Mammary epithelial cell (primary cell): ENCODE measurements at regions of chr7 and their contacts with region 1.

Region 1: DNA sequence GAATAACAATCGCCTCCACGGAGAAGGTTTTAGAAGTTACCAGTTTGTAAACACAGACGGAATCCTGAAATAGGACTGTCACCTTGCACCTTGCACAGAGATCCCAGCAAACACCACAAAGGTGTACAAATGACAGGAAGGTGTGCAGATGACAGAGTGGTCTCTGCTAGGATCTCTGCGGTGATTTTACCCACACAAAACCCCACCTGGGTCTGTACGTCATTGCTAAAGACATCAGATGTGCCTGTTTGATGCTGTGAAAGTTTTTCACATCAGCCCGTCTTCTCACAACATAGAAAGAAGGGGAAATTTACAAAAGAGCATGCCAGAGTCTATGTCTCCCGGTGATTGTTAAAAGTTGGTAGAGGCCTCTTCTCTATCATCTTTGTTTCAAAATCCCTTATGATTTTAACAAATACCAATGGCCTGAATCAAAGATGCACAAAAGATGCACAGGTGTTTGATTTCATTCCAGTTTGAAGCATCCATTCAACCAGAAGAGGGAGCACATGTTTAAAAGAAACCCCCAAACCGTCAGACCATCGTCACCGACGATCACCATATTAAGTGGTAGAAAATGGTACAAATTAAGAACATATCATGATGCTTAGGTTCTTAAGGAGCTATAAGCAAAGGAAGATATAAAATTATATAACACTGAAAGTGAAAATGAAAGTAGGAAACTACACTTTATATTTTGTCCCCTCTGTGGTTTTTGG is 576.5 kb downstream of the PTPRN2 start:
- DNase-seq: no peak
- H3K4me3 ChIP-seq: no peak overlapping the region
- H3K27ac ChIP-seq: no peak overlapping the region
- H3K4me1 ChIP-seq: no peaks in the 10 kb centered on the region
- H3K27me3 ChIP-seq: no peaks in the 10 kb centered on the region
- CTCF ChIP-seq: no peak

Region 2: DNA sequence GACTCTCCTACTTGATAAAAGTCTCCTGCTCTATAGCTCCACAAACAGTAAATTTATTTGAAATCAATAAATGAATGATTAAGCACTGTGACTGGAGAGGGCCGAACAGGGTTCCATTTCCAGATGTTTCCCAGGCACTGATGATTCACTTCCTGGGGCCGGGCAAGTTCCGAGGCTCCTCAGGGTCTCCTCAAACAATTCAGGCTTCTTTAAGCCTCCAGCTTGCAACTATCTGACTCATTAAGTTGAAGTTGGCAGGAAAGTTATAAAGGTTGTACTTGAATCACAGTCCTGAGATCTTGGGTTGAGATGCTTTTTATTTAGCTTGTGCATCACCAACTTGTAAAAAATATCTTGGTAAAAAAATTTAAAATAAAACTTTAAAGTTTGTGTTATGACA is 61.4 kb before region 1 on chr7:
- CTCF ChIA-PET with region 1: no interaction called
- dilution Hi-C with region 1: loop called (anchors 5 kb)
- in situ Hi-C with region 1: no loop called
- intact Hi-C with region 1: no loop called
- DNase-seq: no peak
- H3K4me3 ChIP-seq: no peak overlapping the region
- H3K27ac ChIP-seq: no peak overlapping the region
- H3K4me1 ChIP-seq: no peaks in the 10 kb centered on the region
- H3K27me3 ChIP-seq: no peaks in the 10 kb centered on the region
- CTCF ChIP-seq: no peak